Calu3 (cell line): ENCODE measurements at regions of chr15 and their contacts with region 1.

Region 1: DNA sequence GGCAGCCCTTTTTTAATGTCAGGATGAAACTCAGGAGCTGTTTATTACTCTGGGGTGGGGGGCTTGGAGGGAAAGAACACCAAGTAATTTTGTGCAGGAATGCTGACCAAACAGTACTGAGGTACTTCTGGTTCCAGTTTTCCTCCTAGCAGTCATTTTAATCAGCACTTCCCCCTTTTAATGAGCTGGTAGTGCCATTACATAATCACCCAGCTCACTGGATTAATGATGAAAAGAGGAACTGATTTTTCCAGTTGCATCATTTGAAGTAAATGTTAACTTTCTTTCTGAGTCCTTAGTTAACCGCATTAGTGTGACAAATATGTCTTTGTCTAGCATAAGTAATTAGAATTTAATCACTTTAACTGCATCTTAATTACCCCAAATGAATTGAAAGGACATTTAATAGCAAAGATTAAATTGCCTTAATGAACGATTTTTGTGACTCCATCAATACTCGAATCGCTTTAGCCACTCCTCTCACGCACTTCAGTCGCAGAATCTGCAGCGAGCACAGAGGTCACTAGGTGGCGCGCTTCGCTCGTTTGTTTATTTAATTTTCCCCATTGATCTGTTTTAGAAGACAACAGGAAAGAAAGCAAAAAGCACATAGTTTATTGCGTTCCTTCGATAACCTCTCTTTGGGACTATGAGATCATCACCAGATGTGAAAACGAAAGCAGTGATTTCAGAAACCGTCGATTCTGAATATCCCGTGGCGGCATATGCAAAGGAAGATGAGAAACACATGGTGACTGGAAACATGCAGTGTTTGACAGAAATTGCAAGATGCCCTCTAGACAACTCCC is 9.8 kb downstream of the ONECUT1 start:
- DNase-seq: peak; percentile 71
- H3K4me3 Mint-ChIP-seq: peak overlapping the region; percentile 57
- H3K27ac Mint-ChIP-seq: no peak overlapping the region
- H3K4me1 Mint-ChIP-seq: peaks cover 7% of the 10 kb centered on the region
- H3K27me3 Mint-ChIP-seq: peaks cover 38% of the 10 kb centered on the region
- CTCF ChIP-seq: peak; percentile 69

Region 2: GRCh38 chr15:53197426-53197839 is 417.1 kb after region 1 on chr15:
- CTCF ChIA-PET with region 1: no interaction called
- intact Hi-C with region 1: loop called (anchors 2 kb)
- DNase-seq: peak; percentile 78
- H3K4me3 Mint-ChIP-seq: peak overlapping the region; percentile 40
- H3K27ac Mint-ChIP-seq: no peak overlapping the region
- H3K4me1 Mint-ChIP-seq: no peaks in the 10 kb centered on the region
- H3K27me3 Mint-ChIP-seq: no peaks in the 10 kb centered on the region
- CTCF ChIP-seq: peak; percentile 90

Region 3: DNA sequence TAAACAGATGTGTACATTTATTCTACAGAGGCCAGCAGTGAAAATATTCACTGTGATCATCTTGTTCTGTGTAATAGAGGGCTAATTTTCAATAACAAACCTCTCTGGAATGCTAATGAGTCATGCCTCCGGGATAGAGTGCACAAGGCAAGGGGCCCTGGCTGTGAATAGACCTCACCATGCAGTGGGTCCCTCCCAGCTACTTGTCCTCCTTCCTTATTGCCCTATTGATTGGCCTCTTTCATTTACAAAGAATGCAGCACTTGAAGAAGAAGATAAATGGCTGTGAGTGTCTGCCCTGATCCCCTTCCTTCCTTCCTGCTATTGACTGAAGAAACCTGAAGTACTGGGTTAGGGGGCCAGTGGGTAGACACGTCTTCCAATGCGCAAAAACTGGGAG is 542.8 kb after region 1 on chr15:
- CTCF ChIA-PET with region 1: no interaction called
- intact Hi-C with region 1: loop called (anchors 5 kb)
- DNase-seq: peak; percentile 74
- H3K4me3 Mint-ChIP-seq: no peak overlapping the region
- H3K27ac Mint-ChIP-seq: peak overlapping the region; percentile 14
- H3K4me1 Mint-ChIP-seq: peaks cover 14% of the 10 kb centered on the region
- H3K27me3 Mint-ChIP-seq: no peaks in the 10 kb centered on the region
- CTCF ChIP-seq: no peak

Region 4: GRCh38 chr15:53378096-53378800 is 597.9 kb after region 1 on chr15:
- CTCF ChIA-PET with region 1: no interaction called
- intact Hi-C with region 1: loop called (anchors 10 kb)
- DNase-seq: no peak
- H3K4me3 Mint-ChIP-seq: no peak overlapping the region
- H3K27ac Mint-ChIP-seq: no peak overlapping the region
- H3K4me1 Mint-ChIP-seq: no peaks in the 10 kb centered on the region
- H3K27me3 Mint-ChIP-seq: no peaks in the 10 kb centered on the region
- CTCF ChIP-seq: no peak

Region 5: GRCh38 chr15:53453253-53454105 is 673.1 kb after region 1 on chr15:
- CTCF ChIA-PET with region 1: no interaction called
- intact Hi-C with region 1: loop called (anchors 10 kb)
- DNase-seq: peak; percentile 27
- H3K4me3 Mint-ChIP-seq: no peak overlapping the region
- H3K27ac Mint-ChIP-seq: peak overlapping the region; percentile 60
- H3K4me1 Mint-ChIP-seq: peaks cover 34% of the 10 kb centered on the region
- H3K27me3 Mint-ChIP-seq: no peaks in the 10 kb centered on the region
- CTCF ChIP-seq: no peak

Region 6: GRCh38 chr15:53512030-53512429 is 731.7 kb after region 1 on chr15:
- CTCF ChIA-PET with region 1: interaction called, 4 read pairs
- intact Hi-C with region 1: loop called (anchors 1 kb)
- DNase-seq: no peak
- H3K4me3 Mint-ChIP-seq: no peak overlapping the region
- H3K27ac Mint-ChIP-seq: no peak overlapping the region
- H3K4me1 Mint-ChIP-seq: no peaks in the 10 kb centered on the region
- H3K27me3 Mint-ChIP-seq: no peaks in the 10 kb centered on the region
- CTCF ChIP-seq: no peak

Region 7: GRCh38 chr15:53716909-53717876 is 936.8 kb after region 1 on chr15:
- CTCF ChIA-PET with region 1: no interaction called
- intact Hi-C with region 1: loop called (anchors 2 kb)
- DNase-seq: no peak
- H3K4me3 Mint-ChIP-seq: no peak overlapping the region
- H3K27ac Mint-ChIP-seq: no peak overlapping the region
- H3K4me1 Mint-ChIP-seq: no peaks in the 10 kb centered on the region
- H3K27me3 Mint-ChIP-seq: no peaks in the 10 kb centered on the region
- CTCF ChIP-seq: peak; percentile 19